Caco-2 (cell line): ENCODE measurements at regions of chr2 and their contacts with region 1.

Region 1: GRCh38 chr2:207847807-207848544 is 78.3 kb upstream of the FZD5 start:
- DNase-seq: peak; percentile 72 to 86
- H3K4me3 ChIP-seq: no peak overlapping the region
- H3K4me3 Mint-ChIP-seq: no peak overlapping the region
- H3K27ac Mint-ChIP-seq: peak overlapping the region; percentile 49
- H3K4me1 ChIP-seq: peaks cover 52% of the 10 kb centered on the region
- H3K4me1 Mint-ChIP-seq: peaks cover 42% of the 10 kb centered on the region
- H3K27me3 ChIP-seq: no peaks in the 10 kb centered on the region
- H3K27me3 Mint-ChIP-seq: no peaks in the 10 kb centered on the region
- CTCF ChIP-seq: no peak

Region 2: DNA sequence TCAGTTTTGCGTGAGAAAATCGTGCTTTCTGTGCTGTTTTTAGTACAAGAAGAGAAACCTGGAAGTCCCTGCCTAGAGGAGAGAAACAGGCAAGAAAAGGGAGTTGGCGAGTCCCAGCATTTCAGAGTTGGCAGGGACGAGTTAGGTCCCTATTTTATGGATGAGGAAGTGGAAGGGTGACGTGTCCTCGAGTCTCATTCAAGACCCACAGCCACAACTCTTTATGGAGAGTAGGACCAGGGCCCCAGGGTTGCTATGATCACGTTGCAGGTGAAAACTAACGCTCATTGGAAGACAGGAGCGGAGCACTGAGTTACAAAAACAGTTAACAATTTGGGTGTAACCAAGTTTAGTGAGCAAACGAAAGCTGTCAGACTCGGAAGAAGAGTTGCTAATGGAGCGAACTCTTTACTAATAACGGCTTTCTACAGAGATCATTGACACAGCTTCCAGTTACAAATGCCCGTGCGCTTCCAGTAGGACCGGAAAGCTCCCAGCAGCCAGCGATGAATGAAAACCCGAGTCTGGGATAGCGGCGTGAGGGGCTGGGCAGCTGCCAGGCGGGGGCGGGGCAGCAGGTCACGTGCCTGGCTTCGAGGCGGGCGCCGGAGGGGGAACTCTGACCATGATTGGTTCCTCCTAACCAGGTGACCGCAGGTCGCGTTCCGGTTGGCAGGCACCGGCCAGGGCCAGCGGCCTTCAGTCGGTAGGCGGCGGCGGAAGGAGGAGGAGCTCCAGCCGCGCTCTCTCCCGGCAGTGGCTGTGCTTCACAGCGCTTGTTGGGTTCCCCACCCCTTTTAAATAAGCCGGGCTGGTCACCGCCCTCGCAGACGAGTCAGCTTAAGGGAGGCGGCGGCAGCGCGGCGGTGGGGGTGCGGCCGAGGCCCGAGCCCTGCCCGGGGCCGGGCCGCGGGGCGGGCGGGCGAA is 136.9 kb before region 1 on chr2 and contains the start of gene CCNYL1:
- CTCF ChIA-PET with region 1: no interaction called
- POLR2A ChIA-PET with region 1: no interaction called
- intact Hi-C with region 1: no loop called
- DNase-seq: peak; percentile 100
- H3K4me3 ChIP-seq: peak within 1 kb of the TSS; percentile 83
- H3K4me3 Mint-ChIP-seq: peak within 1 kb of the TSS; percentile 96
- H3K27ac Mint-ChIP-seq: peak within 1 kb of the TSS; percentile 88
- H3K4me1 ChIP-seq: peaks cover 14% of the 10 kb centered on the region; the same call in 1 of the 2 replicates
- H3K4me1 Mint-ChIP-seq: peaks cover 6% of the 10 kb centered on the region
- H3K27me3 ChIP-seq: no peaks in the 10 kb centered on the region
- H3K27me3 Mint-ChIP-seq: no peaks in the 10 kb centered on the region
- CTCF ChIP-seq: peak in 1 of 2 experiments; percentile 20
- total RNA-seq, gene CCNYL1: 39.4 and 40.7 TPM in 2 replicates

Region 3: DNA sequence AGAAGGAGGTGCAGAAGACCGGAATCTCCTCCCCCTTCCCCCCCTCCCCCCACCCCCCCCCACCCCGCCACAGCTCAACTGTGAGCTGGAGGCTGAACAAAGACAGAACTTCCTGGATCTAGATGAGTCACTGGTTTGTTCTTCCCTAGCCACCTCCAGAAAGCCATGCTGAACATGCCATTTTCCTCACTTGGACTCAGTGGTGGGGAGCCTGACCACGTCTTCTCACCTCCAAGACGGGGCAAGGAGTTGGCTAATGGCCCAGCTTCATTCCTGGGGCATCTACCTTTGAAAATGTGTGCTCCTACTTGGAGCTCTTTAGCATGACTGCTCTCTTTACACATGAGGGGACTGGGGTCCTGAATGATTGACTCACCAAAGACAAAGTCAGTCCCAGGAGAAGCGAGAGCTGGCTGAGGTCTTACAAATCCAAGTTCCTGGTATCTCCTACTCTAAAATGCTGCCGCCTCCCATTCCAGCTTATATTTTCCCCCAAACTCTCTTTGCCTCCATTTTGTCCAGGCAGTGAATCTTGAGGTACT is 55.7 kb before region 1 on chr2:
- CTCF ChIA-PET with region 1: interaction called, 3 read pairs
- POLR2A ChIA-PET with region 1: interaction called, 5 read pairs
- intact Hi-C with region 1: loop called (anchors 1 kb)
- DNase-seq: peak; percentile 54 to 62
- H3K4me3 ChIP-seq: no peak overlapping the region
- H3K4me3 Mint-ChIP-seq: peak overlapping the region; percentile 34
- H3K27ac Mint-ChIP-seq: peak overlapping the region; percentile 93
- H3K4me1 ChIP-seq: peaks cover 44% of the 10 kb centered on the region
- H3K4me1 Mint-ChIP-seq: peaks cover 27% of the 10 kb centered on the region
- H3K27me3 ChIP-seq: no peaks in the 10 kb centered on the region
- H3K27me3 Mint-ChIP-seq: no peaks in the 10 kb centered on the region
- CTCF ChIP-seq: no peak

Region 4: GRCh38 chr2:207833251-207833751 is 14.7 kb before region 1 on chr2:
- CTCF ChIA-PET with region 1: interaction called, 3 read pairs
- POLR2A ChIA-PET with region 1: no interaction called
- intact Hi-C with region 1: loop called (anchors 1 kb)
- DNase-seq: no peak
- H3K4me3 ChIP-seq: no peak overlapping the region
- H3K4me3 Mint-ChIP-seq: no peak overlapping the region
- H3K27ac Mint-ChIP-seq: peak overlapping the region; percentile 86
- H3K4me1 ChIP-seq: peaks cover 50% of the 10 kb centered on the region
- H3K4me1 Mint-ChIP-seq: peaks cover 47% of the 10 kb centered on the region
- H3K27me3 ChIP-seq: no peaks in the 10 kb centered on the region
- H3K27me3 Mint-ChIP-seq: no peaks in the 10 kb centered on the region
- CTCF ChIP-seq: no peak

Region 5: GRCh38 chr2:207912665-207913064 is 64.7 kb after region 1 on chr2:
- CTCF ChIA-PET with region 1: no interaction called
- POLR2A ChIA-PET with region 1: no interaction called
- intact Hi-C with region 1: loop called (anchors 1 kb)
- DNase-seq: peak in 1 of 2 experiments; percentile 33
- H3K4me3 ChIP-seq: no peak overlapping the region
- H3K4me3 Mint-ChIP-seq: peak overlapping the region; percentile 21
- H3K27ac Mint-ChIP-seq: peak overlapping the region; percentile 91
- H3K4me1 ChIP-seq: peaks cover 23% of the 10 kb centered on the region
- H3K4me1 Mint-ChIP-seq: peaks cover 22% of the 10 kb centered on the region
- H3K27me3 ChIP-seq: no peaks in the 10 kb centered on the region
- H3K27me3 Mint-ChIP-seq: no peaks in the 10 kb centered on the region
- CTCF ChIP-seq: no peak

Region 6: GRCh38 chr2:207974216-207974605 is 126.2 kb after region 1 on chr2:
- CTCF ChIA-PET with region 1: no interaction called
- POLR2A ChIA-PET with region 1: no interaction called
- intact Hi-C with region 1: loop called (anchors 2 kb)
- DNase-seq: peak; percentile 58 to 60
- H3K4me3 ChIP-seq: no peak overlapping the region
- H3K4me3 Mint-ChIP-seq: peak overlapping the region; percentile 8
- H3K27ac Mint-ChIP-seq: peak overlapping the region; percentile 29
- H3K4me1 ChIP-seq: peaks cover 38% of the 10 kb centered on the region
- H3K4me1 Mint-ChIP-seq: peaks cover 31% of the 10 kb centered on the region
- H3K27me3 ChIP-seq: no peaks in the 10 kb centered on the region
- H3K27me3 Mint-ChIP-seq: no peaks in the 10 kb centered on the region
- CTCF ChIP-seq: no peak

Region 7: DNA sequence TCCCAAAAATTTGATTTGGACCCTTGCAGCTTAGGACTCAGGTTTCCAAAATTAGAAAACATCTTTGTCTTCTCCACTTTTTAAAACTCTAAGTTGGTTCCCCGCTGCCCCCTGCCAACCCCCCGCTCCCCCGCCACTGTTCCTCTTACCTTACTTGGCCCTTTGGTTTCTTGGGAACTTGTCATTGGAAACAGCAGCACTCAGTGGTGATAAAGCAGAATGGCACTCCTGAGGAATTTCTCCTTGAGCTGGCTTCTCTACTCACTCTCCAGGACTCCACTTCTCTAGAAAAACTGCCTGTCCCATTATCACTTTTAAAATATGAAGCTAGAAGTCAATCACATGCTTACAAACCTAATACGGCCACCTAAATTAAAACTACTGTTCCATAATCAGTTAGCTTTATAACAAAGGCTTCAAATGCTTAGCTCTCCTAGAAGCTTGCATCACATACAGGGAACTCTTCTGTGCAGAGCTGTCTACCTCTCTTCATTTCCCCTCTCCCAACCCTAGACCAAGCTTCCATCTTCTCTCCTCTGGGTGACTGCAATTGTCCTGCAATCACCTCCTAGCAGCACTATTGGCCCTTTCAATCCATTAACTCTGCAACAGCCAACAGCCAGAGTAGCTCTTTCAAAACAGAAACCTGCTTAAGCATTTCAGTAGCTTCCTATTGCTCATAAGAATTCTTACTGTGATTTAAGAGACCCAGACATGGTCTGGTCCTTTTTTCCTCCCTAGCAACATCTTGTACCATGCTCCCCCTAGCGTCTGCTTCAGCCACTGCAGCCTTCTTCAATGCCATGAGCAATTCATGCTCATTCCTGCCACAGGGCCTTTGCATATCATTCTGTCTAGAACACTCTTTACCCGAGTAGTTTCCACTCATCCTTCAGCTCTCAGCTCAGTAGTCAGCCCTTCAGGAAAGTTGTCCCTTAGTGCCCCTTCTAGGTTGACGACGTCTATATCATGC is 192.5 kb after region 1 on chr2:
- CTCF ChIA-PET with region 1: interaction called, 11 read pairs
- POLR2A ChIA-PET with region 1: no interaction called
- intact Hi-C with region 1: no loop called
- DNase-seq: peak; percentile 80 to 83
- H3K4me3 ChIP-seq: no peak overlapping the region
- H3K4me3 Mint-ChIP-seq: no peak overlapping the region
- H3K27ac Mint-ChIP-seq: peak overlapping the region; percentile 24
- H3K4me1 ChIP-seq: peaks cover 20% of the 10 kb centered on the region
- H3K4me1 Mint-ChIP-seq: peaks cover 26% of the 10 kb centered on the region
- H3K27me3 ChIP-seq: no peaks in the 10 kb centered on the region
- H3K27me3 Mint-ChIP-seq: no peaks in the 10 kb centered on the region
- CTCF ChIP-seq: peak; percentile 73 to 81